Lower leg skin (tissue), 4 donors: ENCODE measurements at regions of chr11 and their contacts with region 1.

Region 1: DNA sequence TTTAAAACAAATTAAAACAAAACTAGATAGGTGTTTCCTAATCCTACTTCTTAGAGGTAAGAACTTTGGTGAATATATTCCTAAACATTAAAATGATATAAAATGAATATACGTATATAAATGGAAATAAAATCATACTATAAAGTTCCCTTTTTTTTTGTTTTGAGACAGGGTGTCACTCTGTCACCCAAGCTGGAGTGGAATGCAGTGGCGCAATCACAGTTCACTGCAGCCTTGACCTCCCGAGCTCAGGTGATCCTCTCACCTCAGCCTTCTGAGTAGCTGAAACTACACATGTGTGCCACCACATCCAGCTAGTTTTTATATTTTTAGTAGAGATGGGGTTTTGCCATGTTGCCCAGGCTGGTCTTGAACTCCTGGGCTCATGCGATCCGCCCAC is 44.9 kb downstream of the NPAT start:
- DNase-seq: no peak
- H3K4me3 ChIP-seq: no peak overlapping the region
- CTCF ChIP-seq: no peak
- POLR2A ChIP-seq: no peak

Region 2: DNA sequence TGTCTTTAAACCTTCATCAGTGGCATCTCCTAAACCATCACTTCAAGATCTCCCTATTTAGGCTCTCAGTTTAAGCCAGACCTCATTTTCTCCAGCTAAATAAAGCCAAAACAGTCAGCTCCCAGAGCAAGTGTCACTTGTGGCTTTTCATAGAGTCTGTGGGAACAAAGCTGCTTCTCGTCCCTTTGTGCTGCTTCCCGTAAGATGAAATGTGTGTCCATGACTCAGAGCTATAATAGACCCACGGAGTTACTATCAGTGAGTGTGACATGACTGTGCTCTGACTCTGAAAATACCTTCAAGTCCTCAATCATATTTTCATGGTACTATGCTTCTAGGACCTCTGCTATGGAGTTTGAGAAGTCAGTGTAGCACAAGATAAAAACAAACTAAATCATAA is 408.4 kb before region 1 on chr11:
- intact Hi-C with region 1: loop called (anchors 10 kb)
- DNase-seq: no peak
- H3K4me3 ChIP-seq: no peak overlapping the region
- CTCF ChIP-seq: no peak
- POLR2A ChIP-seq: no peak

Region 3: GRCh38 chr11:108534274-108534882 is 356.8 kb after region 1 on chr11:
- intact Hi-C with region 1: no loop called
- DNase-seq: peak in 1 of 2 donors; percentile 29
- H3K4me3 ChIP-seq: no peak overlapping the region
- CTCF ChIP-seq: no peak
- POLR2A ChIP-seq: no peak

Region 4: GRCh38 chr11:109808569-109808968 is 1631.0 kb after region 1 on chr11:
- intact Hi-C with region 1: no loop called
- DNase-seq: no peak
- H3K4me3 ChIP-seq: no peak overlapping the region
- CTCF ChIP-seq: no peak
- POLR2A ChIP-seq: no peak